Ascending aorta (tissue), 2 donors: ENCODE measurements at regions of chr20 and their contacts with region 1.

Region 1: GRCh38 chr20:3679749-3680700 is 1.8 kb downstream of the ADAM33 start:
- DNase-seq: peak; percentile 46 to 92
- H3K4me3 ChIP-seq: peak overlapping the region; percentile 85 to 88
- H3K27ac ChIP-seq: peak overlapping the region; percentile 90 to 94
- H3K4me1 ChIP-seq: peaks cover 16 to 37% of the 10 kb centered on the region in 2 donors
- H3K27me3 ChIP-seq: no peaks in the 10 kb centered on the region
- CTCF ChIP-seq: no peak

Region 2: GRCh38 chr20:3710703-3711483 is 30.9 kb after region 1 on chr20:
- intact Hi-C with region 1: loop called (anchors 1 kb)
- DNase-seq: peak in 1 of 2 donors; percentile 87
- H3K4me3 ChIP-seq: peak overlapping the region in 1 of 2 donors; percentile 23
- H3K27ac ChIP-seq: no peak overlapping the region
- H3K4me1 ChIP-seq: peaks cover 4 to 5% of the 10 kb centered on the region in 2 donors
- H3K27me3 ChIP-seq: no peaks in the 10 kb centered on the region
- CTCF ChIP-seq: peak; percentile 94 to 98 (median 95)

Region 3: GRCh38 chr20:3753098-3753980 is 73.3 kb after region 1 on chr20:
- intact Hi-C with region 1: loop called (anchors 2 kb)
- DNase-seq: peak in 1 of 2 donors; percentile 78
- H3K4me3 ChIP-seq: no peak overlapping the region
- H3K27ac ChIP-seq: no peak overlapping the region
- H3K4me1 ChIP-seq: peaks cover 3 to 8% of the 10 kb centered on the region in 2 donors
- H3K27me3 ChIP-seq: no peaks in the 10 kb centered on the region
- CTCF ChIP-seq: peak; percentile 66 to 75 (median 67)

Region 4: GRCh38 chr20:3767427-3768341 is 87.7 kb after region 1 on chr20 and contains the start of gene ADISSP:
- intact Hi-C with region 1: loop called (anchors 1 kb)
- DNase-seq: peak; percentile 95 to 99
- H3K4me3 ChIP-seq: peak within 1 kb of the TSS; percentile 78
- H3K27ac ChIP-seq: peak within 1 kb of the TSS; percentile 85 to 87
- H3K4me1 ChIP-seq: peaks cover 5 to 11% of the 10 kb centered on the region in 2 donors
- H3K27me3 ChIP-seq: no peaks in the 10 kb centered on the region
- CTCF ChIP-seq: peak in 1 of 3 experiments; percentile 7
- total RNA-seq, gene ADISSP: 48.4 TPM

Region 5: DNA sequence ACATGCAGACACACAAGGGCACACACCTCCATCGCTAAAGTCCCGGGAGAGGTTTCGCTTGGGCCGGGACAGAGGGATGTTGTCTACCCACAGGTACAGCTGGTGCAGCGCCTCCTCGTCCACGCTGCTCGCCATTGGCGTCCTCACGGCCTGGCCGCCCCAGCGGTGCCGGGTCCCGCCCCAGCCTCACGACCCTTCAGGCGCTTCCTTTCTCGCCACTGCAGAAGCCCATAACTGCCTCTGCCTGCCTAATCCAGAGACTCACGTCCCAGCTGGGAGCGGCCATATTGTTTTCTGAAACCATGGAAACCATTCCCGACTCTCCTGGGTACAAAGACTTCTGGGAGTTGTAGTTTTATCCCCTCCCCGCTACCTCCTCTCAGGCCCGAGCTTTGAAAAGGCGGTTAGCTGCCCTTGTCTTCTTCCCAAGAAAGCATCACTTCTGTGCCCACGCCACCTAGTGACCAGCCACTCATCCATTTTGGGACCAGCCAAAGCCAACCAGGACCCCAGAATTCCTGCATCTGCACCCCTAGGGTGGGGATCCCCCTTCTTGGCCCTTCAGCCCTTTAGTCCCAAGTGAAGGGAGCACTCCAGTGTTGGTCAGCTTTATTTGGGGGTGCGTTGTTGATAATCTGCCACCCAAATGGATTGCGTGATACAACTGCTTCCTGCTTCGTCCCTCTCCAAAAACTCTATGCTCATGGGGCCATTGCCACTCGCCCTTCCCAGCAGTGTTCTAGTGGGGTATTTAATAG is 101.3 kb after region 1 on chr20 and contains the start of gene SPEF1:
- intact Hi-C with region 1: loop called (anchors 2 kb)
- DNase-seq: peak; percentile 61 to 93
- H3K4me3 ChIP-seq: peak within 1 kb of the TSS; percentile 28 to 30
- H3K27ac ChIP-seq: peak within 1 kb of the TSS; percentile 44 to 57
- H3K4me1 ChIP-seq: peaks cover 26 to 38% of the 10 kb centered on the region in 2 donors
- H3K27me3 ChIP-seq: no peaks in the 10 kb centered on the region
- CTCF ChIP-seq: peak; percentile 24 to 50 (median 30)
- total RNA-seq, gene SPEF1: not detected

Region 6: GRCh38 chr20:3846740-3847428 is 166.9 kb after region 1 on chr20 and contains the start of gene MAVS:
- intact Hi-C with region 1: loop called (anchors 5 kb)
- DNase-seq: peak; percentile 35 to 91
- H3K4me3 ChIP-seq: peak within 1 kb of the TSS; percentile 89 to 98
- H3K27ac ChIP-seq: peak within 1 kb of the TSS; percentile 93 to 94
- H3K4me1 ChIP-seq: peaks cover 6 to 15% of the 10 kb centered on the region in 2 donors
- H3K27me3 ChIP-seq: no peaks in the 10 kb centered on the region
- CTCF ChIP-seq: no peak
- total RNA-seq, gene MAVS: 35.2 TPM